ENCODE measurements at regions of chr10 and their contacts with region 1.

Region 1: GRCh38 chr10:112137154-112137987 is 46.2 kb downstream of the GPAM start:
- DNase-seq: no peak
- H3K4me3 ChIP-seq: no peak overlapping the region
- H3K27ac ChIP-seq: no peak overlapping the region
- H3K4me1 ChIP-seq: no peaks in the 10 kb centered on the region
- H3K27me3 ChIP-seq: no peaks in the 10 kb centered on the region
- CTCF ChIP-seq: peak; percentile 63 to 92 (median 77)
- EP300 ChIP-seq: no peak
- POLR2A ChIP-seq: no peak

Region 2: GRCh38 chr10:111756217-111757061 is 380.9 kb before region 1 on chr10:
- intact Hi-C with region 1: loop called (anchors 10 kb)
- DNase-seq: no peak
- H3K4me3 ChIP-seq: no peak overlapping the region
- H3K27ac ChIP-seq: no peak overlapping the region
- H3K4me1 ChIP-seq: no peaks in the 10 kb centered on the region
- H3K27me3 ChIP-seq: no peaks in the 10 kb centered on the region
- CTCF ChIP-seq: peak in 2 of 3 experiments; percentile 11 to 34
- EP300 ChIP-seq: no peak
- POLR2A ChIP-seq: no peak

Region 3: DNA sequence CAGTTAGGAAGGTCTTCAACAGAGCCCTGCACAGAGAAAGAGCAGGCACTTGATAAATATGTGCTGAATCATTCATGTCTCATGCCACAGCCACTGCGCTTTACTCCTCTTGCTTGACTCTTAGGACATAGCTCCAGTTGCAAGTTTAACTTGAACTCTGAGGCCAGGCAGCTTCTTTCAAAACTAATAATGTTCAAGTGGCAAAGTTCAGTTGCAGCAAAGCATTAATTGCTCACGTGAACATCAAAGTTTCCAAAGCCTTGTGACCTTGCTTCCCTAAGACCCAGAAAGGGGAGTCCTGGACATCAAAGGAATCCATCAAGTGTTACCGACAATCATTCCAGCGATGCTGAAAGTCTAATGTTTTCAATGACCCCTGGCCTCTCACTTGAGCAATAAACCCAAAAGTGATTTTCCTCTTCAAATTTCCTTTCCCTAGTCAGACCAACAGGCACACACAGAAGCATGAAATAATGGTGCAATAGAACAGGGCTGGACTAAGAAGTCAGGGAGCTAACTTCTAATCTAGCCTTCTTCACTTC is 124.0 kb after region 1 on chr10:
- intact Hi-C with region 1: no loop called
- DNase-seq: peak; percentile 82
- H3K4me3 ChIP-seq: no peak overlapping the region
- H3K27ac ChIP-seq: no peak overlapping the region
- H3K4me1 ChIP-seq: no peaks in the 10 kb centered on the region
- H3K27me3 ChIP-seq: no peaks in the 10 kb centered on the region
- CTCF ChIP-seq: no peak
- EP300 ChIP-seq: no peak
- POLR2A ChIP-seq: no peak